Gastrocnemius medialis (tissue), 4 donors: ENCODE measurements at regions of chr19 and their contacts with region 1.

Region 1: GRCh38 chr19:4400135-4400936 is at the start of gene SH3GL1:
- DNase-seq: peak; percentile 91 to 92
- ATAC-seq: peak; percentile 70 to 74
- H3K4me3 ChIP-seq: peak within 1 kb of the TSS; percentile 88 to 97 (median 93)
- H3K27ac ChIP-seq: peak within 1 kb of the TSS; percentile 96 to 98 (median 97)
- H3K4me1 ChIP-seq: peaks cover 34 to 46% of the 10 kb centered on the region in 2 donors
- H3K27me3 ChIP-seq: no peaks in the 10 kb centered on the region
- CTCF ChIP-seq: peak; percentile 92 to 99 (median 98)
- POLR2A ChIP-seq: peak; percentile 92 to 98
- total RNA-seq, gene SH3GL1: 11.6 to 19.4 (median 15.8) TPM

Region 2: DNA sequence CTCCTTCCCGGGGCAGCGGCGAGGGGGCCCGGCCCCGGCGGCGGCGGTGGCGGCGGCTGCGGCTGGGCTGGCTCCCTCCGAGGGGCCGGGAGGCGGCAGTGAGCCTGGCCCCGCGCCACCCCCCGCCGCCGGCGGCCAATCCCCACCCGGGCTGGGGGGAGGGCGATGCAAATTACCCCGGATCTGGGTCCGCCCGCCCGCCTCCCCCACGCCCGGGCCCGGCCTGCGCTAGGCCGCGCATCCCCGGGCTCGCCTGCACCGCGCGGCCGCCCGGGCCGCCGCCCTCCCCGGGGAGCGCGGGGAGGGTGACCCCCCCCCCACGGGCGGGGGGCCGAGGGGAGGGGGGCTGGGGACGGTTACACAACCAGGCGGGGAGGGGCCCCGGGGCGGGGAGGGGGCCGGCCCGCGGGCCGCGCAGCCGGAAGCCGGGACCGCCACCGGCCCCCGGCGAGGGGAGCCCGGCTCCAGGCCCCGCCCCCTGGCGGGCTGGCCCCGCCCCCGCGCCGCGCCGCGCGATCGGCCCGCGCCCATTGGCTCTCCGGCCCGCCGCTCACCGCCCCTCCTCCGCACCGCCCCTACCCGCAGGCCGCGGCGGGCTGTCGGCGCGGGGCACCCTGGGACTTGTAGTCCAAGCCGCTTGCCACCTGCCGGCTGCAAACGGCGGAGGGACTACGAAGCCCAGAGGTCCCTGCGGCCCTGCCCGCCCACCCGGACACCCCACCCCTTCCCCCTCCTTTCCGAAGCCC is 334.7 kb before region 1 on chr19:
- in situ Hi-C with region 1: no loop called
- intact Hi-C with region 1: loop called (anchors 10 kb)
- DNase-seq: peak; percentile 96
- ATAC-seq: peak; percentile 57 to 59
- H3K4me3 ChIP-seq: peak overlapping the region; percentile 85 to 100 (median 97)
- H3K27ac ChIP-seq: peak overlapping the region; percentile 85 to 100 (median 100)
- H3K4me1 ChIP-seq: peaks cover 37 to 38% of the 10 kb centered on the region in 2 donors
- H3K27me3 ChIP-seq: no peaks in the 10 kb centered on the region
- CTCF ChIP-seq: no peak
- POLR2A ChIP-seq: peak in 1 of 2 donors; percentile 57

Region 3: DNA sequence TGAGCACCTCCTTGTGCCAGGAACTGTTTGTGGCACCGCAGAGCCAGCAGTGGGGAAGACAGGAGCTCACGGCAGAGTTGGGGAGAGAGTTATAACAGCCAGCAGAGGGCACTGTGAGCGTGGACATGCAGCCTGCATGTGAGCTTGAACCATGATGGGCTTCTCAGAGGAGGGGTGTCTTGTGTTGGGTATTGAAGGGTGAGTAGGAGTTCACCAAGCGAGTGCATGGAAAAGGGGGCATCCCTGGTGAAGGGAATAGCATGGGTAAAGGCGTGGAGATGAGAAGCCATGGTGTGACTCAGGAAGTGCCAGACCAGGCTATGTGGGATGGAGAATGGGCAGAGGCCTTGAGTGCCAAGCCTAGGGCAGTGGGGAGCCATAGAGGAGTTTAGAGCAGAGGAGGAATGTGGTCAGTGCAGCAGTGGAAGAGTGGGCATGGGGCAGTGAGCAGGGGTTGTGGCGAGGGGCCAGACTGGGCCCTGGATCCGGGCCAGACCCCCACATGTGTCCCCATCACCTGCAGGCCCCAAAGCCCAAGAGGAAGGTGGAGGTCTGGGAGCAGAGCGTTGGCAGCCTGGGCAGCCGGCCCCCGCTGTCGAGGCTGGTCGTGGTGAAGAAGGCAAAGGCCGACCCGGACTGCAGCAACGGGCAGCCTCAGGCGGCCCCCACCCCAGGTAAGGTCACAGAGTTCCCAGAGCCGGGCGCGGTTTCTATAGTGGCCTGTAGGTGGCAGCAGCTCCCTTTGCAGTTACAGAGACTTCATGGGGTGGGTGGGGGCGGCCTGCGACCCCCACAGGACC is 133.0 kb before region 1 on chr19:
- in situ Hi-C with region 1: loop called in 1 of 4 experiments (anchors 25 kb)
- intact Hi-C with region 1: loop called (anchors 5 kb)
- DNase-seq: peak in 1 of 2 donors; percentile 7
- ATAC-seq: peak in 1 of 2 donors; percentile 44
- H3K4me3 ChIP-seq: no peak overlapping the region
- H3K27ac ChIP-seq: no peak overlapping the region
- H3K4me1 ChIP-seq: no peaks in the 10 kb centered on the region
- H3K27me3 ChIP-seq: no peaks in the 10 kb centered on the region
- CTCF ChIP-seq: peak; percentile 76 to 90 (median 78)
- POLR2A ChIP-seq: no peak

Region 4: GRCh38 chr19:4310247-4311121 is 89.9 kb before region 1 on chr19:
- in situ Hi-C with region 1: no loop called
- intact Hi-C with region 1: no loop called
- DNase-seq: no peak
- ATAC-seq: no peak
- H3K4me3 ChIP-seq: no peak overlapping the region
- H3K27ac ChIP-seq: no peak overlapping the region
- H3K4me1 ChIP-seq: no peaks in the 10 kb centered on the region
- H3K27me3 ChIP-seq: peaks cover under 1 to 5% (median 2%) of the 10 kb centered on the region in 3 donors
- CTCF ChIP-seq: no peak
- POLR2A ChIP-seq: no peak

Region 5: GRCh38 chr19:4369888-4370260 is 30.5 kb before region 1 on chr19:
- in situ Hi-C with region 1: no loop called
- intact Hi-C with region 1: loop called (anchors 1 kb)
- DNase-seq: peak in 1 of 2 donors; percentile 68
- ATAC-seq: peak in 1 of 2 donors; percentile 31
- H3K4me3 ChIP-seq: peak overlapping the region in 3 of 4 donors; percentile 6 to 30 (median 27)
- H3K27ac ChIP-seq: peak overlapping the region; percentile 83 to 95 (median 92)
- H3K4me1 ChIP-seq: peaks cover 74 to 82% of the 10 kb centered on the region in 2 donors
- H3K27me3 ChIP-seq: no peaks in the 10 kb centered on the region
- CTCF ChIP-seq: peak; percentile 31 to 65 (median 61)
- POLR2A ChIP-seq: no peak

Region 6: GRCh38 chr19:4449022-4449638 is 48.8 kb after region 1 on chr19:
- in situ Hi-C with region 1: no loop called
- intact Hi-C with region 1: loop called (anchors 2 kb)
- DNase-seq: peak; percentile 89 to 97
- ATAC-seq: peak; percentile 84 to 92
- H3K4me3 ChIP-seq: no peak overlapping the region
- H3K27ac ChIP-seq: peak overlapping the region; percentile 84 to 93 (median 88)
- H3K4me1 ChIP-seq: peaks cover 14 to 19% of the 10 kb centered on the region in 2 donors
- H3K27me3 ChIP-seq: no peaks in the 10 kb centered on the region
- CTCF ChIP-seq: peak; percentile 24 to 51 (median 44)
- POLR2A ChIP-seq: peak; percentile 13 to 18

Region 7: DNA sequence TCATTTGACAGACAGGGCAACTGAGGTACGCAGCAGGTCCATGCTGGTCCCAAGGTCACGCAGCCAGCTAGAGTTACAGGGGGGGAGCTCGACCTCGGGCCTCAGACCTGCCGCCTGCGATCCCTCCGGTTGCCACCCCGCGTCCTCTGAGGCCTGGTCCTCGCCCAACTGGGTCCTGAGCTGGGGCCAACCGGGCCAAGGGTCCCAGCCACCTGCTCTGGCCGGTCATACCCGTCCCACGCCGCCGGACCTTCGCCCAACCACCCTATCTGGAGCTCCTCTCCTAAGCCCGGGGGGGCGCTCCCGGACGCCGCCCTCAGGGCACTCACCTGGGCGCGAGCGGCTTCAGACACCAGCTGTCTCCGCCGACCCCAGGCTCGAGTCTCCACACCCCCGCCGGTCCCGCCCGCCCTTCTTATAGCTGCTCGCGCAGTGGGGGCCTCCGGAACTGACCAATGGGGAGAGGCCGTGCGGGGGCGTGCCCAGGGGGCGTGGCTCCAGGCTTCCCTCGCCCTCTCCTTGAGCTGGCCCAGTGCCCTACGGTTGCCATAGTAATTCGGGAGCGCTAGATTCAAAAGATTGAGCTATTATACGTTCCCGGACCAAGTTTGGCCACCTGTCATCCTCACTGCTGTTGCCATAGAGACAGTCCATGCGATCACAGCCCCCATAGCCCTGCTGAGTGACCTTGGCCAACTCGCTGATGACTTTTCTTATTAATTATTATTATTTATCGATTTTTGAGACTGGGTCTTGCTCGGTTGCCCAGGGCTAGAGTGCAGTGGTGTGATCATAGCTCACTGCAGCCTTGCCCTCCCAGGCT is 134.7 kb after region 1 on chr19 and contains the start of gene PLIN5:
- in situ Hi-C with region 1: no loop called
- intact Hi-C with region 1: loop called (anchors 5 kb)
- DNase-seq: peak; percentile 90 to 92
- ATAC-seq: peak; percentile 54 to 56
- H3K4me3 ChIP-seq: peak within 1 kb of the TSS; percentile 58 to 61 (median 58)
- H3K27ac ChIP-seq: peak within 1 kb of the TSS; percentile 89 to 98 (median 92)
- H3K4me1 ChIP-seq: peaks cover 37 to 38% of the 10 kb centered on the region in 2 donors
- H3K27me3 ChIP-seq: no peaks in the 10 kb centered on the region
- CTCF ChIP-seq: peak in 4 of 5 experiments; percentile 9 to 30 (median 16)
- POLR2A ChIP-seq: peak; percentile 97 to 98
- total RNA-seq, gene PLIN5: 23.5 to 127 (median 52.9) TPM